IMR-90 (cell line): ENCODE measurements at regions of chr21 and their contacts with region 1.

Region 1: DNA sequence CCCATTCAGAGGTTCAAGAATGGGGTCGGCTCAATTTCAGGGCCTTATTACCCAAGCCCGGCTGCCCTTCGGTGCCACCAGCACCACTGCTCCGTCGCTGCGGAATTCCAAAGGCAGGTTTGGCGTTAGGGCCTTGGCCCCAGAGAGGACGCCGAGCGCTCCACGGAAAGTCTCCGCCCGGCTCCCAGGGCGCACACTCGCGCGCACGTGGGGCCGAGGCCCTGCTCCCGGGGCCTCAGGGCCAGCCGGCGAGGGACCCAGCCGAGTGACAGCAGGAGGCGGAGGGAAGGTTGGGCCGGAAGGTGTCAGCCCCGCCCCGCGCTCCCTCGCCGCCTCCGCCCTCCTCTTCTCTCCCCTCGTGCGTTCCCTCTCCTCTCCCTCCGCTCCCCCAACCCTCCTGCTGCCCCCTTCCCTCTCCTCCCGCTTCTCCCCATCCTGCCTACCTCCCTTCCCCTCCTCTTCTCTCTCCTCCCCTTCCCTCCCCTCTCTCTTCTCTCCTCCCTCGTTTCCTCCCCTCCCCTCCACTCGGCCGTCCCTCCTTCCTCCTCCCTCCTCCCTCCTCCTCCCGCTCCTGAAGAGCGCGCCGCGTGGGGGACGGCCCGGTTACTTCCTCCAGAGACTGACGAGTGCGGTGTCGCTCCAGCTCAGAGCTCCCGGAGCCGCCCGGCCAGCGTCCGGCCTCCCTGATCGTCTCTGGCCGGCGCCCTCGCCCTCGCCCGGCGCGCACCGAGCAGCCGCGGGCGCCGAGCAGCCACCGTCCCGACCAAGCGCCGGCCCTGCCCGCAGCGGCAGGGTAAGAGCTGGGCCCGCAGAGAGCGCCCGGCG is at the start of gene ETS2:
- DNase-seq: peak; percentile 92
- ATAC-seq: peak; percentile 85
- H3K4me3 ChIP-seq: peak within 1 kb of the TSS; percentile 95
- H3K27ac ChIP-seq: peak within 1 kb of the TSS; percentile 91
- H3K4me1 ChIP-seq: peaks cover 28% of the 10 kb centered on the region
- H3K27me3 ChIP-seq: no peaks in the 10 kb centered on the region
- CTCF ChIP-seq: no peak
- POLR2A ChIP-seq: peak; percentile 98
- RAD21 ChIP-seq: no peak; the same call in none of the 2 replicates
- total RNA-seq, gene ETS2: 20.6 and 21.7 TPM in 2 replicates

Region 2: DNA sequence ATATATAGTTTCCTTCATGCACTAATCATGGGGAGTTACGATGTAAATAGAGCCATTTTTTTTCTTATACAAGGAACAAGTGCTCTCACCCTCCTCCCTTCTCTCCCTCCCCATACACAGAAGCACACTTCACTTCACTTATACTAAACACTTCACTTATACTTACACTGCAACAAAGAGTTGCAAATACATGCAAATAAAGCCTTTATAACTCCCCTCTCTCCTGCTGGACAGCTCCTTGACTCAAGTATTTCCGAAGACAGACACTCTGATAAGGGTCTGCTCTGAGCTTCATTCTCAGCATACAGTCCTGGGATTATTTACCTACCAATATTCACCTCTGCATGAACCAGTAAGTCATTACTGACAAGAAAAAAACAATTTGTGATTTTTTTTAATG is 271.7 kb before region 1 on chr21:
- CTCF ChIA-PET with region 1: no interaction called
- POLR2A ChIA-PET with region 1: no interaction called
- dilution Hi-C with region 1: no loop called
- in situ Hi-C with region 1: no loop called
- intact Hi-C with region 1: loop called (anchors 1 kb)
- DNase-seq: no peak
- ATAC-seq: no peak
- H3K4me3 ChIP-seq: no peak overlapping the region
- H3K27ac ChIP-seq: no peak overlapping the region
- H3K4me1 ChIP-seq: no peaks in the 10 kb centered on the region
- H3K27me3 ChIP-seq: peaks cover 9% of the 10 kb centered on the region
- CTCF ChIP-seq: no peak
- POLR2A ChIP-seq: no peak
- RAD21 ChIP-seq: no peak

Region 3: DNA sequence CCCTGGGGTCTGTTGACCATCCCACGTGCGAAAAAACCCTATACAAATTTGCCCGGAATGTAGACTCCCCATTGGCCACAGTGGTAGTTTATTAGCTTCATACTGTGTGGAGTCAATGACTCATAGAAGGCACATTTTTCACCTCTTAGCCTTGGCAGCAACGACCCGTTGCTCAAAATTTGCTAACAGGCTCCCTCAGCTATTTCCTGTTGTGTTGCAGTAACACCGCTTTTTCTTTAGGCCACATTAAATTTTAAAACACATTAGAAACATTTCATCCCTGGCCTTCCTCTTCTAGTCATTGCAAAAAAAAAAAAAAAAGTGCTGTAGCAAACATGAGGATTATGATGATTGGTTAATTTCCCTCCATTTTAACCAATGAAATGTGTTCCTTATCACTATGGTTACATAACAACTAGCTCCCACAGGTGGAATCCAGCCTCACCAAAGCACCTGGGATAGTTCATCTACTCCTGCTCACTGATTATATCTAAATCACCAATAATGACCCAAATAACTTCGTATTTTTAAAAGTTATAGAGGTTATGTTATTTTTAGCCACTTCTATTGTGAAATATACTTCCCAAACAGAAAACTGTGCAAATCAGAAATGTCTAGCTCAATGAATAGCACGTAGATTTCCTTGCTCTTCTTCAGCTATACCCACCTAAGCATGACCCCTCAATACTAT is 49.7 kb before region 1 on chr21:
- CTCF ChIA-PET with region 1: no interaction called
- POLR2A ChIA-PET with region 1: no interaction called
- dilution Hi-C with region 1: no loop called
- in situ Hi-C with region 1: loop called (anchors 10 kb)
- intact Hi-C with region 1: loop called (anchors 1 kb)
- DNase-seq: peak; percentile 95
- ATAC-seq: peak; percentile 82
- H3K4me3 ChIP-seq: no peak overlapping the region
- H3K27ac ChIP-seq: no peak overlapping the region
- H3K4me1 ChIP-seq: peaks cover 17% of the 10 kb centered on the region
- H3K27me3 ChIP-seq: no peaks in the 10 kb centered on the region
- CTCF ChIP-seq: no peak
- POLR2A ChIP-seq: no peak
- RAD21 ChIP-seq: 0 out of 2 replicates have a peak, but pooled peaks have one; percentile 20

Region 4: DNA sequence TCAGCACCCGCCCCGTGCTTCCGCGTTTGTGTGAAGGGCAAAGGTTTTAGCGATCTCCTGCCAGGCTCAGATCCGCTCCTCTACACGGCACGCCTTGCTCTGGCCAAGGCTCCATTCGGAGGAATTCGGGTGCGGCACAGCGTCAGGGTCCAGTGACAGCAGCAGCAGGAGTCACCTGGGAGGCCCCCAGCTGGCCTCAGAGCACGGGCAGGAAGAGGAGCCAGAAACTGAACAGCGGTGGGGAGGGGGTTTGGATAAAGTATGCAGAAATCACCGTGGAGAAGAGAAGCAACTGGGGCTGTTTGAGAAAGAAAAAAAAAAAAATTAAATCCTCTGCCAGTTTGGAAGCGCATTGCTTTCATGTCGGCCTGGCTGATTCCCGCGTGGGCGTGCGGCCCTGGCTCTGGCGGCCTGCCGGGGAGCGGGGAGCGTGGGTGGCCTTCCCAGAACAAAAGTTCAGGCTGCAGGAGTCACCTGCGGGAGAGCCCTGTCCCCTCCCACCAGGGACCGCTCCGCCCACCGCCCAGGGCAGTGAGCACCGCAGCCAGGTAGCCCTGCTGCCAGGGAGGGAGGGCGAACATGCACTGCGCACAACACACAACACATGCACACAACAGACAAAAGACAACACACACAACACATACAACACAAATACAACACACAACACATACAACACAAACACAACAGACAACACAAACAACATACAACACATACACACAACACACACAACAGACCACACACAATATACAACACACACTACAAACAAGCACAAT is 107.8 kb after region 1 on chr21:
- CTCF ChIA-PET with region 1: no interaction called
- POLR2A ChIA-PET with region 1: no interaction called
- dilution Hi-C with region 1: no loop called
- in situ Hi-C with region 1: no loop called
- intact Hi-C with region 1: loop called (anchors 5 kb)
- DNase-seq: peak; percentile 69
- ATAC-seq: peak; percentile 40
- H3K4me3 ChIP-seq: no peak overlapping the region
- H3K27ac ChIP-seq: no peak overlapping the region
- H3K4me1 ChIP-seq: peaks cover 17% of the 10 kb centered on the region
- H3K27me3 ChIP-seq: no peaks in the 10 kb centered on the region
- CTCF ChIP-seq: no peak
- POLR2A ChIP-seq: no peak
- RAD21 ChIP-seq: no peak

Region 5: GRCh38 chr21:38985568-38986378 is 180.2 kb after region 1 on chr21:
- CTCF ChIA-PET with region 1: no interaction called
- POLR2A ChIA-PET with region 1: interaction called, 12 read pairs
- dilution Hi-C with region 1: no loop called
- in situ Hi-C with region 1: no loop called
- intact Hi-C with region 1: loop called (anchors 10 kb)
- DNase-seq: peak; percentile 93
- ATAC-seq: peak; percentile 73
- H3K4me3 ChIP-seq: no peak overlapping the region
- H3K27ac ChIP-seq: peak overlapping the region; percentile 78
- H3K4me1 ChIP-seq: peaks cover 34% of the 10 kb centered on the region
- H3K27me3 ChIP-seq: no peaks in the 10 kb centered on the region
- CTCF ChIP-seq: no peak
- POLR2A ChIP-seq: no peak
- RAD21 ChIP-seq: no peak

Region 6: GRCh38 chr21:39084979-39085729 is 279.6 kb after region 1 on chr21:
- CTCF ChIA-PET with region 1: no interaction called
- POLR2A ChIA-PET with region 1: interaction called, 16 read pairs
- dilution Hi-C with region 1: no loop called
- in situ Hi-C with region 1: no loop called
- intact Hi-C with region 1: no loop called
- DNase-seq: no peak
- ATAC-seq: no peak
- H3K4me3 ChIP-seq: no peak overlapping the region
- H3K27ac ChIP-seq: no peak overlapping the region
- H3K4me1 ChIP-seq: peaks cover 7% of the 10 kb centered on the region
- H3K27me3 ChIP-seq: peaks cover 2% of the 10 kb centered on the region; the same call in 1 of the 2 replicates
- CTCF ChIP-seq: no peak
- POLR2A ChIP-seq: no peak
- RAD21 ChIP-seq: no peak

Region 7: GRCh38 chr21:39137248-39138178 is 332.0 kb after region 1 on chr21:
- CTCF ChIA-PET with region 1: interaction called, 4 read pairs
- POLR2A ChIA-PET with region 1: no interaction called
- dilution Hi-C with region 1: no loop called
- in situ Hi-C with region 1: no loop called
- intact Hi-C with region 1: loop called (anchors 1 kb)
- DNase-seq: peak; percentile 24
- ATAC-seq: no peak
- H3K4me3 ChIP-seq: no peak overlapping the region
- H3K27ac ChIP-seq: no peak overlapping the region
- H3K4me1 ChIP-seq: peaks cover 7% of the 10 kb centered on the region; the same call in 1 of the 2 replicates
- H3K27me3 ChIP-seq: peaks cover 19% of the 10 kb centered on the region
- CTCF ChIP-seq: peak; percentile 16; the same call in 1 of the 2 replicates
- POLR2A ChIP-seq: no peak
- RAD21 ChIP-seq: no peak